PC-9 (cell line): ENCODE measurements at regions of chr12 and their contacts with region 1.

Region 1: DNA sequence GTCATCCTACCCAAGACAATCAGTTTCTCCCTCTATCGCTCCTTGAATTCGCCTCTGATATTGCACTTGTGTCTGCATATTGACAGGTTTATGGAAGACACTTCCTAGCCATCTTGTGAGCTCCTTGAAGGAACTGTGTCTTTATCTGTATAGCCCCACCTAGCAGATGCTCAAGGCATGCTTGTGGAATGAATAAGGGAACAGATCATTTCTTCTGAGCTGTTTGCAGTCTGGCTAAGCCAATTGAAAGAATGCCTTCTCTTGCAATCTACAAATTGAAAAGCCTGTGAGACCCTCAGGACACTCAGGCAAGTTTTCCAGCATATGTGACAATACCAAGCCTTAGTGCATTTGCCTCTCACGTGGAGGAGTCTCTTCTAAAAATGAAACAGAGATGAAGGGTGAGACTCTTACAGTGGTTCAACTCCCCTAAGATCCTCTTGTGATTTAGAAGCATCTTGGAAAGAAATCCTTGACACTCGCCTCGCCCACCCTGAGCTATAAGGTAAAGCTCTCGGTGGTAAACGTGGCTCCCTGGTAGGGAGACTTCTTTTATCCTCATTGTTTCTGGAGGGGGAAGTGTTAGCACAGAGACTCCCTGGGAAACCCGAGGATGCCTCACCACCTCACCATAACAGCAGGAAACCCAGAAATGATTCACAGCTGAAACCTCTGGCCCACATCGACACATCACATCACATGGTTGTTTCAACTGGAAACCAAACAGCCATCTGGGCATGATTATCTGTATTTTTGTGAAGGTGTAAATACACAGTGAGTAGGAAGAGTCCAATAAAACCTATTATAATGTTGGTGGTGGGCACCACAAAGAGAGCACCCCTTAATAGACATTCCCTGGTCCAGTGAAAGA is 112.3 kb upstream of the BCL2L14 start:
- DNase-seq: peak; percentile 60 to 92
- H3K4me3 ChIP-seq: peak overlapping the region; percentile 12; the same call in 1 of the 2 replicates
- H3K27ac ChIP-seq: peak overlapping the region; percentile 99
- H3K4me1 ChIP-seq: peaks cover 28% of the 10 kb centered on the region
- H3K27me3 ChIP-seq: no peaks in the 10 kb centered on the region
- CTCF ChIP-seq: no peak; the same call in 1 of the 2 replicates

Region 2: DNA sequence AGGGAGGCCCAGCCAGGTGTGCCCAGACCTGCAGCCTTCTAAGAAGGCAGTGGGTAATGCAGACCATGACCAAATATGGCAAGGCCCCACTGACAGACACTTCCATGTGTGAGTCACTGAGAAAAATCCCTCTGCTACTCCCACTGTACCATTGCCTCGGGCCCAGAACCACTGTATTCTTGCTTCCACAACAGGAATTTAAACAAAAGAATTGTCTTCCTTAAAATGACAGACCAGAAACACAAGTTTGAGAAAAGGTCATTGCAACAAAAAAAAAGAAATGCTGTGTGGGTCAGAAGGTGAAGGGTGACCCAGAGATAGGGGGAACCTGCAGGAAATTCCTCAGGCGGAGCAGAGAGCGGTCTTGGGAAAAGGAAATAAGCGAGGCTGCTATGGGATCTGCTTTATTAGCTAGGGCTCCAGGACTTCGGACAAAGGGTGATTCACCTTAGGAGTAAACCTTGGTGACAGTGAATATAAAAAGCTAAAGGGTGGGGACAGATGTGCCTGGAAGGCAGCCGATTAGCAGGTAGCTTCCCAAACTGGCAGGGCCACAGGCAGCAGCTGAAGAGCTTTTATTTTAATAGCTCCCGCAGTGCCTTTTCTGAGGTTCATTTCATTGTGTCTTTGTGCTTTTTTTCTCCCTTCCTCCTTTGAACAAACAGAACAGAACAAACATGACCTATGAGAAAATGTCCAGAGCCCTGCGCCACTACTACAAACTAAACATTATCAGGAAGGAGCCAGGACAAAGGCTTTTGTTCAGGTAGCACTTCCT is 73.0 kb before region 1 on chr12:
- CTCF ChIA-PET with region 1: no interaction called
- POLR2A ChIA-PET with region 1: no interaction called
- intact Hi-C with region 1: loop called (anchors 1 kb)
- DNase-seq: peak; percentile 89 to 99
- H3K4me3 ChIP-seq: peak overlapping the region; percentile 35; the same call in 1 of the 2 replicates
- H3K27ac ChIP-seq: peak overlapping the region; percentile 99
- H3K4me1 ChIP-seq: peaks cover 39% of the 10 kb centered on the region
- H3K27me3 ChIP-seq: no peaks in the 10 kb centered on the region
- CTCF ChIP-seq: no peak

Region 3: DNA sequence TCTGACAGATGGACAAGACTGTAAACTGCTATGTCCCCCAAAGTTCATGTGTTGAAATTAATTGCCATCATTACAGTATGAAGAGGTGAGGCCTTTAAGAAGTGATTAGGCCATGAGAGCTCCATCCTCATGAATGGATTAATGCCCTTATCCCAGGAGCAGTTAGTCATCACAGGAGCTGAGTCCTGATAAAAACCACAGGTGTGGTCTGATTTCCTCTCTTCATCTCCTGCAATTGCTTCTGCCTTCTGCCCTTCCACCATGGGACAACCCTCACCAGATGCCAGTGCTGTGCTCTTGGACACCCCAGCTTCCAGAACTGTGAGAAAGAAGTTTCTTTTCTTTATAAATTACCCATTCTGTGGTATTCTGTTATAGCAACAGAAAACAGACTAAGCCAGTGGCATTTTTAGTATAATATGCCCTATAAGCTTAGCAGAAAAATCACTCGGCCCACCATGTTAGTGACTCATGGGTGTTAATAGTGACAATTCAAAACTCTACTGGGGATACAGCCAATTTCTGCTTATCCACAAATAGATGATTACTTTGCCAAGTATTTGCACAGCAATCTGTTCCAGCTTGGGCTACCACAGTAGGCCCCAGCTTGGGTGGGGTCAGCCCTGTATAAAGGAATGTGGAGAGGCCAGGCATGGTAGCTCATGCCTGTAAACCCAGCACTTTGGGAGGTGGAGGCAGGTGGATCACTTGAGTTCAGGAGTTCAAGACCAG is 16.7 kb before region 1 on chr12:
- CTCF ChIA-PET with region 1: no interaction called
- POLR2A ChIA-PET with region 1: interaction called, 10 read pairs
- intact Hi-C with region 1: no loop called
- DNase-seq: peak; percentile 76 to 86
- H3K4me3 ChIP-seq: no peak overlapping the region
- H3K27ac ChIP-seq: peak overlapping the region; percentile 83
- H3K4me1 ChIP-seq: peaks cover 22% of the 10 kb centered on the region
- H3K27me3 ChIP-seq: no peaks in the 10 kb centered on the region
- CTCF ChIP-seq: no peak

Region 4: DNA sequence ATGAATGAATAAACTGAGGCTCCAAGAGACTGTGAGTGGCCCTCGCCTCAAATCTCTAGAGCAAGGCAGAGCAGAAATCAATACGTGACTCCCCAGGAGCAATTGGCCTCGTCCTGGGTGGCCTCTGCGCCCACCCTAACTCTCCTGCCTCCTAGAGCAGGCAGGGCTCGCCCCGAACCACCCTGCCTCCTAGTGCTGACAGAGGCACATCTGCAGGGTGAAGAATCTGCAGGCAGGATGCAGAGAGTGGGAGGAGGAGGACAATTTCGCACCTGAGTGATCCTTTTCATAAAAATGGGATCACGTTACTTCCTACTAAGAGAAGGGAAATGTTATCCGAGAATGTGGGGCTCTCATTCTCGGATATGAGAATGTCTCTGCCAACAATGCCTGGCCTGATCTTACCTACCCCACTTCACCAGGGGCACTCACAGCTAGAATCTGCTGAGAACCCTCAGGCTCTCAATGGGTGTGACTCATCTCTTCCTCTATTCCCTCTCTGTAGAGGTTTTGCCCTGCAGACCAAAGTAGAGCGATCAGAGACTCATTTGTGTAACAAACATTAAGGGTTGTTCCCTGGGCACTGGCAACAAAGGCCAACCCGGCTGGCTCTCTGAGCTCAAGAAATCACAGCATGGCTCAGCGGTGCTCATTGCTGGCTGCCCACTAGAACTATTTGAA is 50.6 kb after region 1 on chr12:
- CTCF ChIA-PET with region 1: interaction called, 4 read pairs
- POLR2A ChIA-PET with region 1: no interaction called
- intact Hi-C with region 1: loop called (anchors 2 kb)
- DNase-seq: peak; percentile 80 to 98
- H3K4me3 ChIP-seq: no peak overlapping the region
- H3K27ac ChIP-seq: peak overlapping the region; percentile 94
- H3K4me1 ChIP-seq: peaks cover 45% of the 10 kb centered on the region
- H3K27me3 ChIP-seq: no peaks in the 10 kb centered on the region
- CTCF ChIP-seq: no peak; the same call in 1 of the 2 replicates

Region 5: GRCh38 chr12:13223179-13223859 is 1264.9 kb after region 1 on chr12:
- CTCF ChIA-PET with region 1: no interaction called
- POLR2A ChIA-PET with region 1: no interaction called
- intact Hi-C with region 1: no loop called
- DNase-seq: peak; percentile 71 to 95
- H3K4me3 ChIP-seq: no peak overlapping the region
- H3K27ac ChIP-seq: peak overlapping the region; percentile 96
- H3K4me1 ChIP-seq: peaks cover 46% of the 10 kb centered on the region
- H3K27me3 ChIP-seq: no peaks in the 10 kb centered on the region
- CTCF ChIP-seq: no peak